Ovary (tissue), 10 donors: ENCODE measurements at regions of chr15 and their contacts with region 1.

Region 1: DNA sequence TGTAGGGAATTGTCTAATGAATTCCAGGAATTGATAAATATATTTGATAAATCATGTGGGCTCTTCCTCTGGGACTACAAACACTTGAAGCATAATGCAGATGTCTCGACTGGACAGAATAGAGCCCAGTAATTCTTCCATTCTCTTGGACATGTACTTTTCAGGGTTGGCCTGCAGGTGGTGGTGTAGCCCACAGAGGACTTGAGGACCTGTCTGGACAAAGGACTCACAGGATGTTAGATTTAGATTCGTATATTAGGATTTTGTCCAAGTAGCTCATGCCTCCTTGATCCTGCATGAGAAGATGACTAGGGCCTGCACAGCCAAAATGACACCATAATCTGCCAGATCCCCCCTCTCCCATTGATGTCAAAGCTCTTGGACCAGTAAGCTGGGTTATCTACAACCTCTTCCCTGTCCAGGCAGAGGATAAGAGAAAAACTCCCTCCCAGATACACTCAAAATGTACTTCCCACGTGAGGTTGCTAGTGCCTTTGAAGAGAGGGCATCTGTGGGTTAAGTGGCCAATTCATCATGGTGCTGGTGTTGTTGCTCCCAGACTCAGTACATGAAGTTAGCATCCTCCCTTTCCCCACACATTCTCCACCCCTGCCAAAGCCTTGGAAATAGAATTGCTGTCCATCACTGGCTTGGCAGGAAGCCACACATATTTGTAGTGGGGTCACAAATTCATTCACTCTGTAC is 88.6 kb upstream of the ZNF280D start:
- DNase-seq: peak; percentile 16 to 50 (median 40)
- H3K4me3 ChIP-seq: no peak overlapping the region
- H3K27ac ChIP-seq: no peak overlapping the region
- H3K4me1 ChIP-seq: no peaks in the 10 kb centered on the region
- H3K27me3 ChIP-seq: no peaks in the 10 kb centered on the region
- CTCF ChIP-seq: no peak
- EP300 ChIP-seq: no peak
- POLR2A ChIP-seq: no peak

Region 2: DNA sequence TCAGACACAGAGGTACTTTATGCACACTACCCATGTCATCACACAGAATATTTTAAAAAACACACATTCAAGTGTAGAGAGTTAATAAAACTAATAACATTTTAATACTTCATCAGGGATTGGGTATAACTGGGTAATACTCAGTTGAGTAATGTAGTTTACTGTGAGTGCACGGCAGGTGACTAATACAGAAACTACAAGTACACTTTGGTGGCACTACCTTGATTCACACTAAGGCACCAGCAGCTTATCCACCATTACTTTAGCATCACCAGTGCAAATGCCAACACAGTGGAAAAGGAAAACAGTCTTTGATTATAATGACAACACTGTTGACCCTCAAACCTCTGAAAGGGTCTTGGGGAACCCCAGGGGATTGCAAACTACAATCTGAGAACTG is 122.1 kb before region 1 on chr15:
- intact Hi-C with region 1: no loop called
- DNase-seq: no peak
- H3K4me3 ChIP-seq: no peak overlapping the region
- H3K27ac ChIP-seq: no peak overlapping the region
- H3K4me1 ChIP-seq: no peaks in the 10 kb centered on the region
- H3K27me3 ChIP-seq: no peaks in the 10 kb centered on the region
- CTCF ChIP-seq: no peak
- EP300 ChIP-seq: no peak
- POLR2A ChIP-seq: no peak

Region 3: DNA sequence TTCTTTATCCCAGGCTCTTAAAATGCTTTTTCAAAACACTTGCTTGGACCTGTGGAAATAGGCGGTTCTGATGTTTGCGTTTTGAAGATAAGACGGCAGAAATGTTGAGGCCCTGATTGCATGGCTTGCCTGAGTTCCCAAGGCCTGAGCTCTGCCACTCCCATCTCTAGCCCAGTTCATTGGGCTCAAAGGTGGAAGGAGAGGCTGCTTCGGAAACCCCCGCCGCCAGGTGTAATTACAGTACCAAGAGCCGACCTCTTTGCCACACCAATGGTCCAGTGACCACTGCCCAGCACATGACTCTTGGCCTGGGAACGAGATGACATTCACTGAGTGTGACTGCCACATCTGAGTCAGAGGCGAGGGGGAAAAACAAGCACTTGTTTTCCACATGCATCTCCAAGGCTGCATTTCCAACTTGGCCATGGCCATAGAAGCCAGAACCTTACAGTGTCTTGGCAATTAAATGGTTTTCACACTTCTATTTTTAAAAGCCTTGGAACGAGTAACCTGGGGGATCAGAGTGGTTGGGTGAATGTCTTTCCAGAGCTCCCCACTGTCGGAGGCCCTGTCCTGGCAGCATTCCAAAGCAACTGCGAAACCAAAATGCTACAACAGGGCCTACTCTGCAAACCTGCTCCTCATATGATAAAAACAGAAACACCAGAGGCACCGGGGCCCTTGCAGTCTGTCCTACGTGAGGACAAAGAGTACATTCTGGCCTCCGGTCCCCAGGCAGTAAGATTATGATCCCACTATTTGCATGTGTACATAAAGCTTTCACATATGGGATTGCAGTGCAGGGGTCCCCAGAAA is 490.7 kb after region 1 on chr15:
- intact Hi-C with region 1: loop called in 1 of 4 experiments (anchors 10 kb)
- DNase-seq: no peak
- H3K4me3 ChIP-seq: no peak overlapping the region
- H3K27ac ChIP-seq: no peak overlapping the region
- H3K4me1 ChIP-seq: no peaks in the 10 kb centered on the region
- H3K27me3 ChIP-seq: no peaks in the 10 kb centered on the region
- CTCF ChIP-seq: no peak
- EP300 ChIP-seq: no peak
- POLR2A ChIP-seq: no peak